PC-3 (cell line): ENCODE measurements at regions of chr19 and their contacts with region 1.

Region 1: DNA sequence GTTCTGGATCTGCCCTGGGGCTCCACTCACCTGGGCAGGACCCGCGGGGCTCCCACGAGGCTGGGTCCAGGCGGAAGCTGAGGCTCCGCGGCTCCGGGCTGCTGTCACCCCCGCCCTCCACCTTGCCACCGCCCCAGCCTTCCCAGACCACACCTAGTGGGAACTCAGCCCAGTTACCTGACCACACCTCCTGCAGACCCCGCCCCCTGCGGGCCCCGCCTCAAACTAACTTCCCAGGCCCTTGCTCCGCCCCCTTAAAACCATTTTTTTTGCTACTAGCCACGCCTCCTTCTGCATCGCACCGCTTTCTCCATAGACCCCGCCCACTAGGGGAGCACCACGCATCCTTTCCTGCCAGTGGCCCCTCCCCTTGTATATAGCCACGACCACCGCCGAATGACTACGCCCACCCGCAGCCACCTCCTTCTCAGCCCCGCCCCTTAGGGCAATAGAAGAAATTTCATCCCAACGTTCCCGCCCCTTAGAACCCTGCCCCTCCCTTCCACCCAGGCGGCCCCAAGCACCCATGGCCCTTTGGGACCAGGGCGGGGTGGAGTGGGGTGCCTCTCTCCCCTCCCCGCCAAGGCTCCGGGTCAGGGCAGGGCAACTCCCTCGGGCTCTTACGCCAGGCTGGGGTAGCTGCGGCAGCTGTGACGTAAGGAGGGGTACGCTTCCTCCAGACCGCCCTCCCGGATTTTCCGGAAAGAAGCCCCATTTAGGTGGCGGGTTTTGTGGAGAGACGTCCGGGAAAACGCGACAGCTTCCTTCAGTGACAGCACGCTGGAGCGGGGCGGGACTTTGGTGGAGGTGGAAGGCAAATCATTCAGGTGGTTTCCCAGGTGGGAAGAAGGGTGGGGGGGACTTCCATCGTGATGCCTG is at the start of gene SH2D3A:
- DNase-seq: peak; percentile 99
- ATAC-seq: peak; percentile 76
- H3K4me3 ChIP-seq: peak within 1 kb of the TSS; percentile 73
- H3K27ac ChIP-seq: peak within 1 kb of the TSS; percentile 95
- H3K4me1 ChIP-seq: peaks cover 31% of the 10 kb centered on the region
- H3K27me3 ChIP-seq: no peaks in the 10 kb centered on the region
- CTCF ChIP-seq: no peak
- total RNA-seq, gene SH2D3A: 141 and 162 TPM in 2 replicates

Region 2: GRCh38 chr19:6801485-6802086 is 34.0 kb after region 1 on chr19:
- CTCF ChIA-PET with region 1: no interaction called
- POLR2A ChIA-PET with region 1: no interaction called
- intact Hi-C with region 1: loop called (anchors 2 kb)
- DNase-seq: peak; percentile 72
- ATAC-seq: no peak; the same call in 1 of the 2 replicates
- H3K4me3 ChIP-seq: peak overlapping the region; percentile 53
- H3K27ac ChIP-seq: peak overlapping the region; percentile 92
- H3K4me1 ChIP-seq: peaks cover 25% of the 10 kb centered on the region
- H3K27me3 ChIP-seq: no peaks in the 10 kb centered on the region
- CTCF ChIP-seq: no peak

Region 3: GRCh38 chr19:6849876-6850275 is 82.3 kb after region 1 on chr19:
- CTCF ChIA-PET with region 1: no interaction called
- POLR2A ChIA-PET with region 1: no interaction called
- intact Hi-C with region 1: no loop called
- DNase-seq: no peak
- ATAC-seq: no peak
- H3K4me3 ChIP-seq: no peak overlapping the region
- H3K27ac ChIP-seq: no peak overlapping the region
- H3K4me1 ChIP-seq: peaks cover 7% of the 10 kb centered on the region
- H3K27me3 ChIP-seq: no peaks in the 10 kb centered on the region
- CTCF ChIP-seq: no peak

Region 4: DNA sequence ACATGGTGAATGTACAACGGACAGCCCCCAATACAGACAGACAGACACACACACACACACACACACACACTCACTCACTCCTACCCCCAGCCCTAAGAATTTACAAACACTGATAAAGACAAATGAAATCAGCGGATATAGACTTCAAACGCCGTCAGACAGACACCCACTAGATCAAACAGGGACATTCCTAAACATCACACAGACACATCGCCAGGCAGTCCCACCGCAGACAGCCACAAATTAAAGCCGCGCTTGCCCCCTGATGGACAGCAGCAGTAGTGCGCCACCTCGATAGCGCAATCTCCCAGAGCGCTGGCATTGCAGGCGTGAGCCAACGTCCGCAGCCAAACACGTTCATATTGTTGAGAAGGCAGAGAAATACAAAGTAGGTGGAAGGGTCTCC is 95.1 kb after region 1 on chr19:
- CTCF ChIA-PET with region 1: interaction called, 3 read pairs
- POLR2A ChIA-PET with region 1: no interaction called
- intact Hi-C with region 1: loop called (anchors 1 kb)
- DNase-seq: peak; percentile 96
- ATAC-seq: peak; percentile 85
- H3K4me3 ChIP-seq: peak overlapping the region; percentile 35; the same call in 1 of the 2 replicates
- H3K27ac ChIP-seq: no peak overlapping the region
- H3K4me1 ChIP-seq: peaks cover 6% of the 10 kb centered on the region; the same call in 1 of the 2 replicates
- H3K27me3 ChIP-seq: peaks cover 8% of the 10 kb centered on the region
- CTCF ChIP-seq: peak; percentile 98

Region 5: DNA sequence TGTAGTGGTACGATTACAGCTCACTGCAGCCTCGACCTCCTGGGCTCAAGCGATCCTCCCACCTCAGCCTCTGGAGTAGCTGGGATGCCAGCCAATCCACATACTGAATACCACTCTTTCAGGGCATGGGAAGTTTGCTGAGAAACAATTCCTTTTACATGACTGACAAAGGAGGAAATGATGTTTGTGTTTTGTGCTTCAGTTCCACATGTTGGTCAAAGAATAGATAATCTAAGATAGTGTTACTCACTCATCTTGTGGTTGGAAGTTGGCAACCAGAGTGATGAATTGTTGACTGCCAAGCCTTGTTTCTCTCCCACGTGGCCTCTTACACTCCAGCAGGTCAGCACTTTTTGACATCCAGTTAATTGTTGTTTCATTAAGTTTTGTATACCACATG is 246.1 kb after region 1 on chr19:
- CTCF ChIA-PET with region 1: no interaction called
- POLR2A ChIA-PET with region 1: no interaction called
- intact Hi-C with region 1: no loop called
- DNase-seq: peak; percentile 84
- ATAC-seq: peak; percentile 56
- H3K4me3 ChIP-seq: no peak overlapping the region
- H3K27ac ChIP-seq: no peak overlapping the region
- H3K4me1 ChIP-seq: no peaks in the 10 kb centered on the region
- H3K27me3 ChIP-seq: peaks cover 13% of the 10 kb centered on the region
- CTCF ChIP-seq: no peak